Activated T-helper 2 cell treated with anti-CD3 and anti-CD28 coated beads, Interferon-gamma antibody, Interleukin-2, Interleukin-4, amounts not matched to agents 10 μg/mL and 5 μg/mL and 100 μg/mL, durations not matched to agents 14 hours and 24 hours and 36 hours (primary cell): ENCODE measurements at regions of chr12 and their contacts with region 1.

Region 1: GRCh38 chr12:31896514-31897039 is 62.6 kb upstream of the RESF1 start:
- DNase-seq: peak; percentile 86
- H3K4me3 Mint-ChIP-seq: peak overlapping the region; percentile 43
- H3K27ac Mint-ChIP-seq: peak overlapping the region; percentile 89
- H3K4me1 Mint-ChIP-seq: peaks cover 31% of the 10 kb centered on the region
- H3K27me3 Mint-ChIP-seq: no peaks in the 10 kb centered on the region

Region 2: DNA sequence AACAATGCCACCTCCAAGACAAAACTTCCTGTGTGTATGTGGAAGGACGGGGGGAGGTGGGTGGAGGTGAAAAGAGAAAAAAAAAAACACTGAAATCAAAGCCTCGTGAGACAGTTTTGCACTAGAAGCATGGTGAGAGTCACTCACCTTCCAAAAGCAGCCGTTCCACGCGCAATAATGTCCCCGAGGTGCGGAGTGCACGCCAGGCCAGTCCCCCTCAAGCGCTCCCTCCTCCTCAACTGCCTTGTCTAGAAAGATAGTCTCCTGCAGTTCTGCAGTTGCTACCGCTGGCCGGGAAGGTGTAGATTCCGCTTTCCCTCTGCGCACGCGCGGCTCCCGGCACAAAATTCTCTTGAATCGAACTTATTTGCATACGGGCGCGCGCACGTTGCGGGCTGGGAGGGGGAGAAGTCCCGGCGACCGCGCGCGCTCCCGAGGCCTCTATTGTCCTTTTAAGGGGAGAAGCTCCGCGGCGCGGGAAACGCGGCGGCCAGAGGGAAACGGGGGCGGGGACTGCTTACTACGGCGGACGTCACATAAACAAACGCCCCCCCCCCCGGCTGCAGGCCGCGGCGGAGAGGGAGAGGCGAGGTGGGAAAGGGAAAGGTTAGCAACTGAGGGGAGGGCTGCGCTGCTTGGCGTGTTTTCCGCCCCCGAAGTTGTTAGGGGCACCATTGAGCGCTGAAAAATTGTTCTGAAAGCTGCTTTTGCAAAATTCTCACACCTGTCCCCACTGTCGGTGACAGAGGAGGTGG is 570.5 kb before region 1 on chr12 and contains the start of gene SINHCAF:
- intact Hi-C with region 1: loop called (anchors 10 kb)
- DNase-seq: peak; percentile 98
- H3K4me3 Mint-ChIP-seq: peak within 1 kb of the TSS; percentile 98
- H3K27ac Mint-ChIP-seq: peak within 1 kb of the TSS; percentile 99
- H3K4me1 Mint-ChIP-seq: peaks cover 17% of the 10 kb centered on the region
- H3K27me3 Mint-ChIP-seq: peaks cover 7% of the 10 kb centered on the region
- total RNA-seq, gene SINHCAF: 223 and 231 TPM in 2 replicates

Region 3: GRCh38 chr12:31682136-31682962 is 214.2 kb before region 1 on chr12:
- intact Hi-C with region 1: loop called (anchors 2 kb)
- DNase-seq: peak; percentile 46
- H3K4me3 Mint-ChIP-seq: no peak overlapping the region
- H3K27ac Mint-ChIP-seq: no peak overlapping the region
- H3K4me1 Mint-ChIP-seq: peaks cover 5% of the 10 kb centered on the region
- H3K27me3 Mint-ChIP-seq: no peaks in the 10 kb centered on the region

Region 4: GRCh38 chr12:31749024-31749704 is 147.4 kb before region 1 on chr12:
- intact Hi-C with region 1: loop called (anchors 1 kb)
- DNase-seq: peak; percentile 67
- H3K4me3 Mint-ChIP-seq: no peak overlapping the region
- H3K27ac Mint-ChIP-seq: peak overlapping the region; percentile 5
- H3K4me1 Mint-ChIP-seq: peaks cover 23% of the 10 kb centered on the region
- H3K27me3 Mint-ChIP-seq: peaks cover 20% of the 10 kb centered on the region

Region 5: DNA sequence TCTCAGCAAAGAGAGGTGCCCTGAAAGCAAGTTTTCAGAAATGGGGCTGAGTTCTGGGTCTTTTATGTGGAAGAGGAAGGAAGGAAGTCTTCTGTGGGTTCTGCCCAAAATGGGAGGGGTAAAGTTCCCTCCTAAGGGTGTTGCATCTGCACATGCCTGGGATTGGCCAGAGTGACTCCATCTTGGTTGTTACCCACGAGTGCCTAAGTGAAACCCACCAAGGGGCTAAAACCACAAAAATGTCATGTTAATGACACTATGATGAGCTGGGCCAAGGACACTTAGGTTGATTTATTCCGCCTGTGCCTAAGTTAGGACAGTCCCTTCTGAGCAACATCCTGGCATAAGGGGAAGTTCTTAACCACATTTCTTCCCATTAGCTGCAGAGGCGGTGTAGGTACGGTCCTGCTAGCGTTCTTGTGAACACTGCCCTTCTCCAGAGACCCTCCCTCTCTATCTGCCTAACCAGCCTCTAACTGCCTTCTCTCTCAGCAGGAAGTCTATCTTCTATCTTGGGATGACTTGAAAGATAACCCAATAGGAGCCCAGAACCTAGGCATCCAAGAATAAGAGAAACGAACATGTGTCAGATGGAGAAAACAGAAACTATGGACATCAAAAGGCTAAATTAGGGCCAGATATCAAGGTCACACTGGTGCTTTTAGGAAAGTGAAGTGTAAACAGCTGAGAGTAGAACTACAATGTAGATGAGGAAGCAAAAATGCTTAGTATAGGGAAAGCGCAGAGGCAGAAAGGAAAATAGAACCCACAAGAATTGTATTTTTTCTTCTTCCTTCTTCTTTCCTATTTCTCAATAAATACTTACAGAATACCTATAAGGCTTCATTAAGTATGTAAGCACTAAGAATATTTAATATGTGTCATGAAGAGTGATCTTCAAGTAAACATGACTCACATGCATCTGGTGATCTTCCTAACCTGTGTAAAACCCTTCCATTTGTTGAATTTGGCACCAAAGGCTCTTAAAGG is 63.5 kb before region 1 on chr12:
- intact Hi-C with region 1: no loop called
- DNase-seq: no peak
- H3K4me3 Mint-ChIP-seq: no peak overlapping the region
- H3K27ac Mint-ChIP-seq: peak overlapping the region; percentile 9
- H3K4me1 Mint-ChIP-seq: peaks cover 14% of the 10 kb centered on the region
- H3K27me3 Mint-ChIP-seq: no peaks in the 10 kb centered on the region

Region 6: DNA sequence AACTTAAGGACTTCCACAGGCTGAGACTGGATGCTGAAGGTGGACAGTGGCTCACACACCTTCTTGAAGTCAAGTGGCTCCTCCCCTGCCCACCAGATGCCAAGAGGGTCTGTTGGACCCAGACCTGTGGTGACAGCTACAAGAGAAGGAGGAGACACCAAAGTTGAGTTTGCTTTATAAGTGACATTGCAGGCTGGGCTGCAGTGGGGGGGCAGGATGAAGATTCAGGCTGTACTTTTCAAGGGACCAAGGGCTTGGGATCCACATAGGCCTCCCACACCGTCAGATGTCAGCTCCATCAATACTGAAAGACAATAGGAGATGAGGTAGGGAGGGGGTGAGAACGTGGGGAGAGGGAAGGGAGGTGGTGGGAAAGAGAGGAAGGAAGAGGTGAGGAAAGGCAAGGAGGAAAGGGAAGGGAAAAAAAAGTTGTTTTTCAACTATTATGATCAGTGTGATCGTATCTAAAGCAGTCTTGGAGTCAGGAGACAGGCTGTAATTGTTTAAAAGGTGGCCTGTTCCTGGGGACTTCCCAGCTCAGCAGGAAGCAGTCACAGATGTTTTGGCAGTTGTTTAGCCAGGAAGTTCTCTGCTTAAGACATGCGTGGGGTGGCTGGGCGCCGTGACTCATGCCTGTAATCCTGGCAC is 21.5 kb before region 1 on chr12:
- intact Hi-C with region 1: loop called (anchors 1 kb)
- DNase-seq: peak; percentile 35
- H3K4me3 Mint-ChIP-seq: no peak overlapping the region
- H3K27ac Mint-ChIP-seq: peak overlapping the region; percentile 100
- H3K4me1 Mint-ChIP-seq: peaks cover 19% of the 10 kb centered on the region
- H3K27me3 Mint-ChIP-seq: no peaks in the 10 kb centered on the region

Region 7: GRCh38 chr12:31989571-31990362 is 93.2 kb after region 1 on chr12:
- intact Hi-C with region 1: loop called (anchors 2 kb)
- DNase-seq: no peak
- H3K4me3 Mint-ChIP-seq: peak overlapping the region; percentile 5
- H3K27ac Mint-ChIP-seq: peak overlapping the region; percentile 69
- H3K4me1 Mint-ChIP-seq: peaks cover 41% of the 10 kb centered on the region
- H3K27me3 Mint-ChIP-seq: no peaks in the 10 kb centered on the region

Region 8: DNA sequence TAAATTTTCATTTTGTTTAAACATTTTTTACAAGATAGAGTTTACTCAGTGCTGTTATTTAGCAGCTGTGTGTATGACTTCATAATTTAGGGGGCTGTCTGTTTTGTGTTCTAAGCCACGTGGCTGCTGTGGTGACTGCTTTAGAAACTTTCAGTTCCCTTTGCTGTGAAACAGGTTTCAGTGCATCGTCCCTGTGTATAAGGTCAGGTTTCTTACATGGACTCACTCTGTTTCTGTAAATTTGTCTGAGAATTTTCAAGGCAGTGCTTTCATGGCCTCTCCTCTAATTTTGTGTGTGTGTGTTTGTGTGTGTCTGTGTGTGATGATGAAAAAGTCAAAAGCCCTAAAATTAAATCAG is 242.5 kb after region 1 on chr12:
- intact Hi-C with region 1: loop called (anchors 5 kb)
- DNase-seq: peak; percentile 16
- H3K4me3 Mint-ChIP-seq: peak overlapping the region; percentile 47
- H3K27ac Mint-ChIP-seq: no peak overlapping the region
- H3K4me1 Mint-ChIP-seq: peaks cover 24% of the 10 kb centered on the region
- H3K27me3 Mint-ChIP-seq: peaks cover 56% of the 10 kb centered on the region